ENCODE measurements at regions of chr21 and their contacts with region 1.

Region 1: GRCh38 chr21:20875742-20876141 is 122.5 kb upstream of the NCAM2 start:
- DNase-seq: peak; percentile 25
- ATAC-seq: no peak
- H3K4me3 ChIP-seq: no peak overlapping the region
- H3K27ac ChIP-seq: no peak overlapping the region
- H3K4me1 ChIP-seq: no peaks in the 10 kb centered on the region
- H3K27me3 ChIP-seq: no peaks in the 10 kb centered on the region
- CTCF ChIP-seq: peak; percentile 46

Region 2: DNA sequence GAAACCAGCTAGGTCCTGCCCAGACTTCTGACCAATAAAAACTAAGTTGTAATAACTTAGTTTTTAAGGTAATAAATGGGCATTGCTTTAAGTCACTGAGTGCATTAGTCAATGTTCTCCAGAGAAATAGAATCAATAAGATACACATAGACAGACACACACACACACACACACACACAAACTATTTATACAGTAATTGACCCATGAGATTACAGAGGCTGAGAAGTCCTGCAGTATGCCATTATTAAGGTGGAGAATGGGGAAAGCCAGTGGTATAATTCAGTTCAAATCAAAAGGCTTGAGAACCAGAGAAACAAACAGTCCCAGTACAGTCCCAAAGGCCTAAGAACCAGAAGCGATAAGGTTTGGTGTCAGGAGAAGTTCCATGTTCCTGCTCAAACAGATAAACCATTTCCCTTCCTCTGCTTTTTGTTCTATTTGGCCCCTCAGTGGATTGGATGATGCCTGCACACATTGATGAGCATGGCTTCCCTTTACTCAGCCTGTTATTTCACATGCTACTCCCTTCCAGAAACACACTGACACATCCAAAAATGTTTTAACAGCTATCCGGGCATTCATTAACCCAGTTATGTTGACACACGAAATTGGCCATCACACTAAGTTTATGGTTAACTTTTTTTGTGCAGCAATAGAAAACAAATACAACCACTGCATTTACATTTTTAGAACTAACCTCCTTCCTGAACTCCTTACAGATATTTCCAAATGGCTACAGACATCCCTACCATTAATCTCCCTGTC is 705.7 kb before region 1 on chr21:
- CTCF ChIA-PET with region 1: no interaction called
- POLR2A ChIA-PET with region 1: no interaction called
- intact Hi-C with region 1: no loop called
- DNase-seq: no peak
- ATAC-seq: no peak
- H3K4me3 ChIP-seq: no peak overlapping the region
- H3K27ac ChIP-seq: no peak overlapping the region
- H3K4me1 ChIP-seq: 0 out of 2 replicates have a peak, but pooled peaks cover 4% of the 10 kb centered on the region
- H3K27me3 ChIP-seq: no peaks in the 10 kb centered on the region
- CTCF ChIP-seq: no peak

Region 3: GRCh38 chr21:20459838-20460237 is 415.9 kb before region 1 on chr21:
- CTCF ChIA-PET with region 1: no interaction called
- POLR2A ChIA-PET with region 1: no interaction called
- intact Hi-C with region 1: loop called (anchors 2 kb)
- DNase-seq: peak; percentile 62
- ATAC-seq: peak; percentile 76
- H3K4me3 ChIP-seq: no peak overlapping the region
- H3K27ac ChIP-seq: no peak overlapping the region
- H3K4me1 ChIP-seq: peaks cover 8% of the 10 kb centered on the region; the same call in 1 of the 2 replicates
- H3K27me3 ChIP-seq: no peaks in the 10 kb centered on the region
- CTCF ChIP-seq: no peak

Region 4: GRCh38 chr21:20486303-20486702 is 389.4 kb before region 1 on chr21:
- CTCF ChIA-PET with region 1: no interaction called
- POLR2A ChIA-PET with region 1: no interaction called
- intact Hi-C with region 1: loop called (anchors 10 kb)
- DNase-seq: no peak
- ATAC-seq: no peak
- H3K4me3 ChIP-seq: no peak overlapping the region
- H3K27ac ChIP-seq: no peak overlapping the region
- H3K4me1 ChIP-seq: no peaks in the 10 kb centered on the region
- H3K27me3 ChIP-seq: no peaks in the 10 kb centered on the region
- CTCF ChIP-seq: no peak

Region 5: GRCh38 chr21:21018821-21019220 is 143.1 kb after region 1 on chr21:
- CTCF ChIA-PET with region 1: no interaction called
- POLR2A ChIA-PET with region 1: no interaction called
- intact Hi-C with region 1: no loop called
- DNase-seq: no peak
- ATAC-seq: no peak
- H3K4me3 ChIP-seq: no peak overlapping the region
- H3K27ac ChIP-seq: no peak overlapping the region
- H3K4me1 ChIP-seq: no peaks in the 10 kb centered on the region
- H3K27me3 ChIP-seq: no peaks in the 10 kb centered on the region
- CTCF ChIP-seq: no peak

Measured in PC-3 (cell line).